ENCODE measurements at regions of chr15 and their contacts with region 1.

Region 1: DNA sequence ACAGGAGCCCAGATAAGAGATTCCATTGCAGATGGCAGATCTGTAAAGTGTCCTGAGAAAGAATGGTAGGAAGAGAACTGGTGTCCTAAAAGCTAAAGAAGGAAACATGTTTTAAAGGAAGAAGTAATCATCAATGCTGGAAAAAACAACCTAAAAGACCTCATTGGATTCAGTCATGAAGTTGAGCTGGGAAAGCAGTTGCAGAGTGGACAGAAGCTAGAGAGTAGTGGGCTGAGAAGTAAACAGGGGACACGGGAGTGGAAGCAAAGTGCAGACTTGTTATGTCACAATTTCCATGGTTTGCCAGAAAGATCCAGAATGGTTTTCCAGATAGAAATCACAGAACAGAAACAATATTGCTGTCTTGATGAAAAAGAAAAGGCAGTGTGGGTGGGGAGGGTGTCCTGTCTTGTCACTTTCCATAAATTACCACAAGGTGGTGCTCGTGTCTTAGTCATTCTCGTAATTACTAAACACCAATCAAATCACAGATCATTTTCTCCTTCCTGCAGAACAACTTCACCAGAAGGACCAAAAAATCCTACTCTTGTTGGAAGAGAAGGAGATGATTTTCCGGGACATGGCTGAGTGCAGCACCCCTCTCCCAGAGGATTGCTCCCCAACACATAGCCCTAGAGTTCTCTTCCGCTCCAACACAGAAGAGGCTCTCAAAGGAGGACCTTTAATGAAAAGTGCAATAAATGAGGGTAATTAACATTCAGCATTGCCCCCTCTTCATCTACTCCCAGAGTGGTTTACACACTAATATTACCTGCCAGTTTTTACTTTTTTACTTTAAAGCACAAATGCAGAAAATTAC is 64.5 kb downstream of the KLHL25 start:
- DNase-seq: peak in 2 of 5 donors; percentile 34 to 45
- ATAC-seq: peak; percentile 18 to 64 (median 57)
- H3K4me3 ChIP-seq: no peak overlapping the region
- H3K27ac ChIP-seq: peak overlapping the region in 5 of 12 donors; percentile 4 to 82 (median 65)
- H3K4me1 ChIP-seq: peaks cover 0 to 41% (median 18%) of the 10 kb centered on the region in 12 donors
- H3K27me3 ChIP-seq: no peaks in the 10 kb centered on the region
- CTCF ChIP-seq: peak; percentile 60 to 83 (median 76)
- POLR2A ChIP-seq: no peak

Region 2: GRCh38 chr15:85825692-85826091 is 95.5 kb after region 1 on chr15:
- intact Hi-C with region 1: loop called in 9 of 10 experiments (anchors 2 to 5 kb)
- DNase-seq: no peak
- ATAC-seq: no peak
- H3K4me3 ChIP-seq: no peak overlapping the region
- H3K27ac ChIP-seq: no peak overlapping the region
- H3K4me1 ChIP-seq: no peaks in the 10 kb centered on the region
- H3K27me3 ChIP-seq: no peaks in the 10 kb centered on the region
- CTCF ChIP-seq: no peak
- POLR2A ChIP-seq: no peak

Region 3: GRCh38 chr15:85840065-85840801 is 110.0 kb after region 1 on chr15:
- intact Hi-C with region 1: loop called in 2 of 10 experiments (anchors 2 kb)
- DNase-seq: peak; percentile 72 to 91 (median 82)
- ATAC-seq: peak; percentile 78 to 95 (median 92)
- H3K4me3 ChIP-seq: peak overlapping the region in 9 of 12 donors; percentile 20 to 55 (median 41)
- H3K27ac ChIP-seq: no peak overlapping the region
- H3K4me1 ChIP-seq: peaks cover 0 to 11% (median 7%) of the 10 kb centered on the region in 12 donors
- H3K27me3 ChIP-seq: no peaks in the 10 kb centered on the region
- CTCF ChIP-seq: peak; percentile 86 to 98 (median 92)
- POLR2A ChIP-seq: no peak